Gastrocnemius medialis (tissue), 4 donors: ENCODE measurements at regions of chr3 and their contacts with region 1.

Region 1: DNA sequence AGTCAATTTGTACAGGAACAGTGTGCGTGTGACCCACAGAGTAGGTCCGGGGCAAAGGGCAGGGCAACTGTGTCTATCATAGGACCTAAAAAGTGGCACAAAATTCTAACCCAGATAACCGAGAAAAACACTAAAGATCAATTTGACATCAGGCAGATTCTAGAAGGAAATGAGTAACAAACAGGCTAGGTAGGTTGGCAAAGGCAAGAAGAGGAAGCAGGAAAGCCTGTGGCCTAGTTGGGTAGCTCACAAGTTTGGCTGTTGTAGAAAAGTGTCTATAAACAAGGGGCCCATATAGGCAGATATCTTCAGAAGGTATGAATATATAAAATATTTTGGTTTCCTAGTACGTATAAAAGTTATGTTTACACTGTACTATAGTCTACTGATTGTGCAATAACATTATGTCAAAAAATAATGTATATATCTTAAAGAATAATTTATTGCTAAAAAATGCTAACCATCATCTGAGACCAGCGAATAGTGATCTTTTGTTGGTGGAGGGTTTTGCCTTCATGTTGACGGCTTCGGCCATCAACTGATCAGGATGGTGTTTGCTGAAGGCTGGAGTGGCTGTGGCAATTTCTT is 13.3 kb upstream of the OR5K1 start:
- DNase-seq: no peak
- ATAC-seq: no peak
- H3K4me3 ChIP-seq: no peak overlapping the region
- H3K27ac ChIP-seq: no peak overlapping the region
- H3K4me1 ChIP-seq: no peaks in the 10 kb centered on the region
- H3K27me3 ChIP-seq: no peaks in the 10 kb centered on the region
- CTCF ChIP-seq: no peak
- POLR2A ChIP-seq: no peak

Region 2: GRCh38 chr3:98359993-98360675 is 89.6 kb before region 1 on chr3:
- in situ Hi-C with region 1: loop called in 1 of 4 experiments (anchors 25 kb)
- intact Hi-C with region 1: no loop called
- DNase-seq: no peak
- ATAC-seq: no peak
- H3K4me3 ChIP-seq: no peak overlapping the region
- H3K27ac ChIP-seq: no peak overlapping the region
- H3K4me1 ChIP-seq: no peaks in the 10 kb centered on the region
- H3K27me3 ChIP-seq: no peaks in the 10 kb centered on the region
- CTCF ChIP-seq: no peak
- POLR2A ChIP-seq: no peak

Region 3: GRCh38 chr3:98433764-98434163 is 15.9 kb before region 1 on chr3:
- in situ Hi-C with region 1: no loop called
- intact Hi-C with region 1: no loop called
- DNase-seq: no peak
- ATAC-seq: no peak
- H3K4me3 ChIP-seq: no peak overlapping the region
- H3K27ac ChIP-seq: no peak overlapping the region
- H3K4me1 ChIP-seq: no peaks in the 10 kb centered on the region
- H3K27me3 ChIP-seq: no peaks in the 10 kb centered on the region
- CTCF ChIP-seq: no peak
- POLR2A ChIP-seq: no peak